ENCODE measurements at regions of chr3 and their contacts with region 1.

Region 1: GRCh38 chr3:75650191-75650590 is 13.9 kb upstream of the FRG2C start:
- DNase-seq: no peak
- ATAC-seq: no peak
- H3K4me3 Mint-ChIP-seq: no peak overlapping the region
- H3K27ac Mint-ChIP-seq: no peak overlapping the region
- H3K4me1 Mint-ChIP-seq: no peaks in the 10 kb centered on the region
- H3K27me3 Mint-ChIP-seq: peaks cover 9% of the 10 kb centered on the region
- CTCF ChIP-seq: no peak

Region 2: GRCh38 chr3:74267588-74268184 is 1382.5 kb before region 1 on chr3:
- CTCF ChIA-PET with region 1: no interaction called
- POLR2A ChIA-PET with region 1: no interaction called
- intact Hi-C with region 1: loop called (anchors 10 kb)
- DNase-seq: no peak
- ATAC-seq: no peak
- H3K4me3 Mint-ChIP-seq: no peak overlapping the region
- H3K27ac Mint-ChIP-seq: no peak overlapping the region
- H3K4me1 Mint-ChIP-seq: no peaks in the 10 kb centered on the region
- H3K27me3 Mint-ChIP-seq: no peaks in the 10 kb centered on the region
- CTCF ChIP-seq: no peak

Region 3: GRCh38 chr3:75294124-75294523 is 356.1 kb before region 1 on chr3:
- CTCF ChIA-PET with region 1: no interaction called
- POLR2A ChIA-PET with region 1: no interaction called
- intact Hi-C with region 1: loop called (anchors 10 kb)
- DNase-seq: no peak
- ATAC-seq: no peak
- H3K4me3 Mint-ChIP-seq: no peak overlapping the region
- H3K27ac Mint-ChIP-seq: no peak overlapping the region
- H3K4me1 Mint-ChIP-seq: no peaks in the 10 kb centered on the region
- H3K27me3 Mint-ChIP-seq: no peaks in the 10 kb centered on the region
- CTCF ChIP-seq: no peak

Region 4: GRCh38 chr3:75951941-75952340 is 301.8 kb after region 1 on chr3:
- CTCF ChIA-PET with region 1: no interaction called
- POLR2A ChIA-PET with region 1: no interaction called
- intact Hi-C with region 1: no loop called
- DNase-seq: no peak
- ATAC-seq: no peak
- H3K4me3 Mint-ChIP-seq: no peak overlapping the region
- H3K27ac Mint-ChIP-seq: no peak overlapping the region
- H3K4me1 Mint-ChIP-seq: no peaks in the 10 kb centered on the region
- H3K27me3 Mint-ChIP-seq: no peaks in the 10 kb centered on the region
- CTCF ChIP-seq: no peak

Measured in activated B cell treated with CpG ODN at 0.5 μM for 24 hours (primary cell).